WTC11 (cell line): ENCODE measurements at regions of chr1 and their contacts with region 1.

Region 1: GRCh38 chr1:6245086-6245868 is 1.3 kb downstream of the HES3 start:
- DNase-seq: peak; percentile 89
- ATAC-seq: peak; percentile 7
- H3K4me3 Mint-ChIP-seq: peak overlapping the region; percentile 81
- H3K27ac Mint-ChIP-seq: no peak overlapping the region
- H3K4me1 Mint-ChIP-seq: peaks cover 33% of the 10 kb centered on the region
- H3K27me3 Mint-ChIP-seq: peaks cover 38% of the 10 kb centered on the region
- CTCF ChIP-seq: peak; percentile 39; the same call in 1 of the 2 replicates

Region 2: GRCh38 chr1:6259491-6260425 is 14.5 kb after region 1 on chr1:
- CTCF ChIA-PET with region 1: interaction called, 164 read pairs
- POLR2A ChIA-PET with region 1: interaction called, 3 read pairs
- DNase-seq: peak; percentile 90
- ATAC-seq: peak; percentile 40
- H3K4me3 Mint-ChIP-seq: peak overlapping the region; percentile 49
- H3K27ac Mint-ChIP-seq: no peak overlapping the region
- H3K4me1 Mint-ChIP-seq: peaks cover 9% of the 10 kb centered on the region
- H3K27me3 Mint-ChIP-seq: peaks cover 21% of the 10 kb centered on the region
- CTCF ChIP-seq: no peak

Region 3: DNA sequence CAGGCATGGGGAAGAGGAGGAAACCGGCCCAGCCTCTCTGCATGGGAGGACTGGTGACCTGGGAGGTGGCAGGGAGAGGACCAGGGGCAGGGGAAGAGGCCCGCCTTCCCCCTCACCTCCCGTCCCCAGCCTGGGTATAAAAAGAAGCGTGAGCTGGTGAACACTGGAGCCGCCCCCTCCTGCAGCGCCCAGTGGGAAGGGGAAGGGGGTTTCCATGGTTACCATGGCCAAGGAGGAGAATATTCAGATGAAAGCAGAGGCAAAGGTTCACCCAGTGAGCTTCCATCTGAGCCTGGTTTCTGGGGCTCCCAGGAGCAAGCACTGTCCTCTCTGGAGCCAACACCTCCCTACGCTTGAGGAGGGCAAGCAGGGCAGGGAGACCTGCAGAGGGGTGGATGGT is 93.4 kb after region 1 on chr1:
- CTCF ChIA-PET with region 1: interaction called, 112 read pairs
- POLR2A ChIA-PET with region 1: interaction called, 3 read pairs
- DNase-seq: no peak
- ATAC-seq: no peak; the same call in 1 of the 2 replicates
- H3K4me3 Mint-ChIP-seq: no peak overlapping the region
- H3K27ac Mint-ChIP-seq: peak overlapping the region; percentile 32; the same call in 1 of the 2 replicates
- H3K4me1 Mint-ChIP-seq: peaks cover 28% of the 10 kb centered on the region
- H3K27me3 Mint-ChIP-seq: no peaks in the 10 kb centered on the region
- CTCF ChIP-seq: no peak

Region 4: DNA sequence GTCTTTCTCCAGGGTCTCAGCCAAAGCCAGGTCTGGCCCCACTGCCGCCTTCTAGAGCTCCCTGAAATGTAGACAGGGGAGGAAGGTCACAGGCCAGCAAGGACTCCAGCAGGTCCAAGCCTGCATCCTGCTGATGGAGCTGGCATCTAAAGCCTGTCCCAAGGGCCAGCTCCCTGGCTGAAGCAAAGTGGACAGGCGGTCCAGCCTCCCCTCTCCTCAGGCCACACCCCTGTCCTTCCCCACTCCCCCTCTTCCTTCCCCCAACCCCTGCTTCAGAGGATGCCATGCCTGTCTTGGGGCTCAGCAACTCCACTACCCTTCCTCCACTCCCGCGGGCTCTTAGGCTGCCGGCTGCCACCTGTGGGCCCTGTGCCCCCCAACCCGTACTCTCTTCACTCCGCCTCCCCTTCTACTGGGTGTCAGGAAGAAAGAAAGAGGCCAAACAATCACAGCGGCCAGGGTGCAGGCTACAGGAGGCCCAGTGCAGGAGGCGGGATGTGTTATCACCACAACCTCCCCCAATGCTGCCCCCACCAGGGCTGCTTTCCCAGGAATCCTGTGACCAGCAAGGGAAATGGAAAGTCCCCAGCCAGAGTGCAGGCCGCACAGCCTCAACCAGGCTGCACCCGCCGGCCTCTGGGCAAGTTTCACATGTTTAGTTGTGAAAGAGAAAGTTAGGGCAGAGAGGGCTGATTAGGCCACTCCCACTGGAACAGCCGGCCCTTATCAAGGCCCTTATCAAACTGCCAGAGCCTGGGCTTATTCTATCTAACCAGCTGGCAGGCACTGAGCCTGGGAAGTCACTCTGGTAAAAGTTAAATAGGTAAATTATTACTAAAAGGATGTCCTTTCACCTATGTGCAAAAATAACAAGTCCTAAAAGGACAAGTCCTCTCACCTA is 114.2 kb after region 1 on chr1:
- CTCF ChIA-PET with region 1: interaction called, 49 read pairs
- POLR2A ChIA-PET with region 1: interaction called, 5 read pairs
- DNase-seq: peak; percentile 42
- ATAC-seq: peak; percentile 11
- H3K4me3 Mint-ChIP-seq: no peak overlapping the region
- H3K27ac Mint-ChIP-seq: peak overlapping the region; percentile 76
- H3K4me1 Mint-ChIP-seq: peaks cover 44% of the 10 kb centered on the region
- H3K27me3 Mint-ChIP-seq: no peaks in the 10 kb centered on the region
- CTCF ChIP-seq: no peak

Region 5: DNA sequence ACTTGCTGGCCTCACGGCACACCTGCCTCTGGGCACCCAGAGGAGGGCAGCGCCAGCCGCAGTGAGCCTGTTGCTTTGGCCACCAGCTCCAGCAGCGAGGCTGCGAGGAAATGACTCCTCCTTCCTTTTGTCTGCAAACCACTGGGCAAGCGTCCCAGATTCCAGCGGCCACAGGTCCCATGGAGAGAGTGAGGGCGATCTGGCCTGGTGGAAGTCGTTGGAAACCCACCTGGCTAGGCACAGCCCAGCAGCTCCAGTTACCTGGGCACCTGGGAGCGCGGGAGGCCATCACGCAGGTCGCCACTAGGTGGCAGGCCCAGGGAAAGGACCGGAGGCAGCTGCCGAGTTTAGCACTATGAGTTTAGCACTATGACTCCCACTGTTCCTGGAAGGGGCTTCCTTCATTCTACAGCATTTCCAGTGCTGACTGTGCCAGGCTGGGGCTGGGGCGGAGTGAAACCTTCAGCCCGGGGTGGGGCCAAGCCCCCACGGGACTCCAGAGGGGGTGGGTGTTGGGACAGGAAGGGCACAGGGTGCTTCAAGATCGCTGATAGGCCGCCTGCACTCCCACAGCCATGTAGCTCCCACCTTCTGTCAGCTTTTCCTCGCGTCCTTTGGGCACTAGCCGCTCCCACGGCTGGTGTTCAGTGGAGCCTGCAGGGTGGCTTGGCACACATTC is 178.2 kb after region 1 on chr1:
- CTCF ChIA-PET with region 1: interaction called, 119 read pairs
- POLR2A ChIA-PET with region 1: interaction called, 3 read pairs
- DNase-seq: peak; percentile 91
- ATAC-seq: peak; percentile 57
- H3K4me3 Mint-ChIP-seq: peak overlapping the region; percentile 60
- H3K27ac Mint-ChIP-seq: no peak overlapping the region
- H3K4me1 Mint-ChIP-seq: peaks cover 6% of the 10 kb centered on the region
- H3K27me3 Mint-ChIP-seq: peaks cover 81% of the 10 kb centered on the region
- CTCF ChIP-seq: peak; percentile 91

Region 6: GRCh38 chr1:6489799-6490180 is 244.5 kb after region 1 on chr1:
- CTCF ChIA-PET with region 1: interaction called, 15 read pairs
- POLR2A ChIA-PET with region 1: no interaction called
- DNase-seq: peak; percentile 87
- ATAC-seq: peak; percentile 46
- H3K4me3 Mint-ChIP-seq: peak overlapping the region; percentile 77
- H3K27ac Mint-ChIP-seq: no peak overlapping the region
- H3K4me1 Mint-ChIP-seq: peaks cover 30% of the 10 kb centered on the region
- H3K27me3 Mint-ChIP-seq: peaks cover 2% of the 10 kb centered on the region; the same call in 1 of the 2 replicates
- CTCF ChIP-seq: peak; percentile 99